ENCODE measurements at regions of chr11 and their contacts with region 1.

Region 1: DNA sequence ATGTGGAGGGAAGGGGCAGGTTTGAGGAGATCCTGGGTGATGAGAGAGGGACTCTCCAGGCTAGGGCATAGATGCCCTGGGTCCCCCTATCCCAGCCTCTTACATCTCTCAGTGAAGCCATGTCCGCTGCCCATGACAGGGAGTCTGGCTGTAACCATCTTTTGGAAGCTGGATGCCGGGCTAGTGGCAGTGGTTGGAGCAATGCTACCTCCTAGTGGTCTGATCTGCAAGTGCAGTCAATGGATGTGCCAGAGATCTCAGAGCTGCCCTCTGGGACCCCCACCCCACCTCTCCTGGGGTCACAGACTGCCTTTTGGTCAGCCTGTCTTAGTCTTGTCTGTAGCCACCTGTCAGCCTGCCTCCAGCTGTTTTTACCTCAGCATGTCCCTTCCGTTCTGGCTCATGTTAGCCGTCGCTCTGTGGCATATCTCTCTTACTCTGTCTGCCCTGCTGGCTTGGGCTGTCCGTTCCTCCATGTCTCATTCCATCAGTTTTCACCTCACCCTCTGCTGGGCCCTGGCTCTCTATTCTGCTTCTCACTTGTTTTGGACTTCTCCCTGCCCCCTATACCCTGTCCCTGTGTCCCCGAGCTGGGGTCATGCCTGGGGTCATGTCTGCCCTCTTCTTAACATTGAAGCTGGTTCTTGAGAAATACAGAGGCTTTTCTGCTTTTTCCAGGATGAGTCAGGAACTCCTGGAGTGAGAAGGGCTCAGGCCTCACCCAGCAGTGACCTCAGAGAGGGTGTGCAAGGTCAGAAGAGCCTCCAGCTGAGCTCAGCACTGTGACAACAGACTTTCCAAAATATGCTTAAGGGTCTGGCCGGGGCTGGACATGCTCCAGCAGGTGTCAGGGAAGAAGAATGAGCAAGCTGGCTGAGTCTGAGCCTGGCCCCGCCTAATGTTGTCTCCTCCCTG is 52.0 kb upstream of the THY1 start:
- DNase-seq: peak; percentile 79
- H3K4me3 Mint-ChIP-seq: no peak overlapping the region
- H3K27ac Mint-ChIP-seq: no peak overlapping the region
- H3K4me1 Mint-ChIP-seq: no peaks in the 10 kb centered on the region
- H3K27me3 Mint-ChIP-seq: peaks cover 4% of the 10 kb centered on the region

Region 2: GRCh38 chr11:119363851-119364590 is 110.9 kb before region 1 on chr11:
- CTCF ChIA-PET with region 1: interaction called, 93 read pairs
- intact Hi-C with region 1: no loop called
- DNase-seq: peak; percentile 42
- H3K4me3 Mint-ChIP-seq: peak overlapping the region; percentile 63
- H3K27ac Mint-ChIP-seq: no peak overlapping the region
- H3K4me1 Mint-ChIP-seq: peaks cover 10% of the 10 kb centered on the region
- H3K27me3 Mint-ChIP-seq: peaks cover 39% of the 10 kb centered on the region

Region 3: DNA sequence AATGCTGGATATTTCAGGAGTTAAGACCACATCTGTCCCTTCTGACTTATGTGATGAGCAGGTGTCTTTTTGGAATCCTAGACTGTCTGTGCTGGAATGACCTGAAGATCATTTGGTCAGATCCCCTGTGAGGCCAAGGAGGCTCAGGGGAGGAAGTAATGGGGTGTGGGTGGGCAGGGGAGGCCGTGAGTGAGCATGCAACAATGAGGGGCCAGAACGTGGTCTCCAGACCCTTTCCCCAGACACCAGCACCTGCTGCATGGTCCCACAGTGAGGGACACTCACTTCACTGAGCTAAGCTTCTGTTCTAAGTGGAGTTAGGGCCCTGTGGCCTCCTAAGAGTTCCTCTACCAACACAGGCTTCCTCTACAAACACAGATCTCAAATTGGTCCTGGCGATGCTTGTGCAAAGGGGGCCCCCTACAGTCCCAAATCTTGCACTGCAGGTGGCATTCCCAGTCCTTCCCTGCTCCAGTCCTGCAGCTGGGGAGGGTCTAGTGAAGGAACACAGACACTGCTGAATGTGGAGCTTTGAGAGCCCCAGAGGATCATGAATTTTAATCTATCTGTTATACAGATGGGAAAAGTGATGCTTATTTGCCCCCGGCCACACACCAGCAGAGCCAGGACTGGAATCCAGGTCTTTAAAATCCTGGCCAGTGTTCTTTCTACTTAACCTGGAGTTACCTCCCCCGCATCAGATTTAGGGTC is 100.9 kb before region 1 on chr11:
- CTCF ChIA-PET with region 1: interaction called, 18 read pairs
- intact Hi-C with region 1: no loop called
- DNase-seq: peak; percentile 63
- H3K4me3 Mint-ChIP-seq: no peak overlapping the region
- H3K27ac Mint-ChIP-seq: no peak overlapping the region
- H3K4me1 Mint-ChIP-seq: peaks cover 4% of the 10 kb centered on the region
- H3K27me3 Mint-ChIP-seq: peaks cover 14% of the 10 kb centered on the region

Region 4: GRCh38 chr11:119381181-119381988 is 93.6 kb before region 1 on chr11 and contains the start of gene USP2:
- CTCF ChIA-PET with region 1: interaction called, 18 read pairs
- intact Hi-C with region 1: loop called (anchors 1 kb)
- DNase-seq: peak; percentile 97
- H3K4me3 Mint-ChIP-seq: no peak within 1 kb of the TSS
- H3K27ac Mint-ChIP-seq: no peak within 1 kb of the TSS
- H3K4me1 Mint-ChIP-seq: peaks cover 5% of the 10 kb centered on the region
- H3K27me3 Mint-ChIP-seq: no peaks in the 10 kb centered on the region
- total RNA-seq, gene USP2: 0.35 to 0.57 TPM

Region 5: DNA sequence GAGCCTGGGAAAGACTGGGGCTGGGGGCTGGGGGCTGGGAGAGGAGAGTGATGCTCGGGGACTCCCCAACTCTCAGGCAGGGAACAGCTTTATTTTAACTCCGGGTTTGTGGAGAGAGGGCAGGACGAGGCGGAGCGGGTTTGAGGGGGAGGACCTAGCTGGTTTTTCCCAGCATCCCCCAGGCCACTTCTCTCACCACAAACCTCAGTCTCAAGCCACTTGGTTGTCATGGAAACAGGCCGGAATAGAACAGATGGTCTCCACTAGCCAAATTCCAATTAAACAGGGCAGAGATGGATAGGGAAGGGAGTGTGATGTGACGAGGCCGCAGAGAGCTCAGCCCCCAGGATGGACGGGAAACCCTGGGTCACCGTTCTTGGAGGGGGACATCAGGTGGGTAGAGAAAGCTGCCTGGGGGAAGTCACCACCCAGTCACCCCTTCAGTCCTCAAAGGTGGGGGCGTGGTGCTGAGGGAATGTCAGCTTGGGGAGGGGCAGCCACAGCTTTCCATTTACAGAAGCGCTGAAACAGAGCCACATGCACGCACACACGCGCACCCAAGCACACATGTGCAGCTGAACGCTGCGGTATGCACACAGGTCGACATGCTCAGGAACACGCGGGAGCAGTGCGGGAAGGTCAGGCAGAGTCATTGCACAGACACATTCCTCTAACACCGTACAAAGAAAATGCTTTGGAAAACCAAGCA is 234.9 kb after region 1 on chr11:
- CTCF ChIA-PET with region 1: no interaction called
- intact Hi-C with region 1: no loop called
- DNase-seq: no peak
- H3K4me3 Mint-ChIP-seq: no peak overlapping the region
- H3K27ac Mint-ChIP-seq: no peak overlapping the region
- H3K4me1 Mint-ChIP-seq: peaks cover 5% of the 10 kb centered on the region
- H3K27me3 Mint-ChIP-seq: peaks cover 14% of the 10 kb centered on the region

Region 6: DNA sequence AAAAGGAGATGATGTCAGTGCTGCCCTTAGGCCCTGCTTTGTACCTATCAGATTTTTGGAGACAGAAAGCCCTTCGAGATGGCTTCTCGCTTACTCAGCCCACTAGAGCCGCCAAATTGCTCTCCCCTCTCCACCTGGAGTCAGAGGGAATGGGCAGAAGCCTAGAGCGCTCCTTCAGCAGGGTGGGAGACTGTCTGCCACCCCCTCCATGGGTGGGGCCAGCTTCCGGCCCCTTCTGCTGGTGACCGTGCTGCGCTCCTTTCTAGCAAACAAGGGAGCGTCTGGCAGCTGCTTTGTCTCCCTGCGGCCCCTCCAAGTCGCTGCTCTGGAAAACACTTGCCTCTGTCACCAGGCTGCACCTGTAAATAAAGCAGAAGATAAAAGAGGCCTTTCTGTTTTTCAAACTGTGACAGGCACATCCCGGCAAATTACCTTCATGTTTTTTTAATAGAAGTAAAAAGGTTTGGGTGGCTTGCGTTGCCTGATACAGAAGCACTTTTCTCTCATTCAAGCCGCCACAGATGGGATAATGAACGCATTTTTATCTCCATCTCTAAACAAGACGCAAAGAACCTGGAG is 399.8 kb after region 1 on chr11:
- CTCF ChIA-PET with region 1: no interaction called
- intact Hi-C with region 1: no loop called
- DNase-seq: no peak
- H3K4me3 Mint-ChIP-seq: no peak overlapping the region
- H3K27ac Mint-ChIP-seq: no peak overlapping the region
- H3K4me1 Mint-ChIP-seq: no peaks in the 10 kb centered on the region
- H3K27me3 Mint-ChIP-seq: peaks cover 9% of the 10 kb centered on the region

Measured in activated naive CD4-positive, alpha-beta T cell treated with anti-CD3 and anti-CD28 coated beads for 36 hours (primary cell).